ENCODE measurements at regions of chr5 and their contacts with region 1.

Region 1: GRCh38 chr5:179907570-179908324 is at the start of gene TBC1D9B:
- DNase-seq: peak; percentile 86
- total RNA-seq, gene TBC1D9B: 41.3 TPM

Region 2: GRCh38 chr5:179806250-179807222 is 101.2 kb before region 1 on chr5 and contains the start of gene MGAT4B:
- intact Hi-C with region 1: loop called (anchors 5 kb)
- DNase-seq: peak; percentile 90
- total RNA-seq, gene MGAT4B: 160 TPM

Region 3: GRCh38 chr5:179866258-179867078 is 41.3 kb before region 1 on chr5:
- intact Hi-C with region 1: loop called (anchors 2 kb)
- DNase-seq: no peak

Region 4: GRCh38 chr5:180040255-180041214 is 132.8 kb after region 1 on chr5:
- intact Hi-C with region 1: no loop called
- DNase-seq: no peak

Region 5: GRCh38 chr5:180071531-180072255 is 163.9 kb after region 1 on chr5 and contains the start of gene RNF130:
- intact Hi-C with region 1: loop called (anchors 5 kb)
- DNase-seq: peak; percentile 97
- total RNA-seq, gene RNF130: 33.7 TPM

Region 6: DNA sequence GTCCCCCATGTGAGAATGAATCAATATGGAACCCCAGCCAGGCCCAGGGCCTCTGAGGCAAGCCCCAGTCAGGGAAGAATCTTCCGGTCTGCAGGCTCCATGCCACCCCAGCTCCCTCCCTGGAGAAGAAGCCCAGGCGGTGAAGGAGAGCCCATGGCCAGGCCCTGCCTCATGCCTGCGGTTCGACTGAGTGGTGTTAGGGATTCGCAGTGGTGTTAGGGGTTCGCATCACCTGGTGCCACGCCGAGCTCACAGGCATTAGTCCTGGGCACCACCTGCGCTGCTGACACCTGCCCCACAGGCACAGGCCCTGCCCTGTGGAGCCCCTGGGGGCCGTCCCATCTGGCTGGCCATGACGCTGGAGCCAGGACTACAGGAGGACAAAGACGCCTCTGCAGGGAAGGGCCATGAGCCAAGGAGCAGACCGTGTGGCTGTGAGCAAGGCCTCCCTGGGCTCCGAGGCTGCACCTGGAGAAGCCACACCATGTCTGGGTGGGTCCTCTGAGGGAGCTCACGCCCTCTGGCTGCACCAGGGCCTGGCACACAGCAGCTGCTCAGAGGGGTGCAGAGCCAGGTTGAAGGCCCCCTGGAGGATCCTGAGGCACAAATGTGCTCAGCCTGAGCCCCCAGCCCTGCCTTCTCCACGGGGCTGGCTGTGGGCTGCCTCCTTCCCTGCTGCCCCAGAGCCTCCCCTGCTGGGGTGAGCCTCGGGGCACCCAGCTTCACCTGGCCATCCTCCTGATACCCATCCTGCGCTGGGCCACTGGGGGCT is 191.4 kb after region 1 on chr5:
- intact Hi-C with region 1: no loop called
- DNase-seq: peak; percentile 59